CD8-positive, alpha-beta T cell (primary cell): ENCODE measurements at regions of chr20 and their contacts with region 1.

Region 1: DNA sequence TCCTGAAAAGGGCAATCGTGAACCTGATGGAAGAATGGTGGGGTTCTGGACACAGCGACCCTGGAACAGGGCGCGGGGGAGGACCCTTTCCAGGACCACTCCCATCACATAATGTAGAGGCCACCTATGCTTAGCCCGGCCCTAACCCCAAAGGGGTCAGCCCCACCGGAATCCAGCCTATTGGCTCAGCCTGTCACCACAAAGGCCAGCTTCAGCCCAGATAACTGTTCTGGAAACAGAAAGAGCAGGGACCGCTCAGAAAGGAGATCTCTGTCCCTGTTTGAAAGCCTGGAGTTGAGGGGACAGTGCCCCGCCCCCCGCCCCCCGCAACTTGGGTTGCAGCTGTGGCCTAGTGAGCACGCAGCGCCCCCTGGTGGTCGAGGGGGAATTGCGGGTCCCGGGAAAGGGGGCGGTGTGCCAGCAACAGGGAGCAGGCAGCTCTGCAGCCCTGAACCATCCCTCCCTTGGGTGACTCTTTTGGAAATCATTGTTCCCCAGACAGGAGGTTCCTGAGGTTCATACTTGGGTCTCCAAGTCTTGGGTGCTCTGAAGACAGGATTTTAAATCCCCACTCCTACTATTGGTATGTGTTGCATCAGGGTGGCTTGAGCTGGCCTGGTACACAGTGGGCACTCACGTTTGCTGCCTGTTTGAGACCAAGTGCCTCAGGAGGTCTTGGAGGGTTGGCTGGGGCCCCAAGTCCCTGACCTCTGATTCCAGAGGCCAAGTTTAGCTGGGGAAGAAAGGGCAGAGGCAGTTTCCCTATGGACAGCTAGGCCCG is 1.5 kb downstream of the SIGLEC1 start:
- DNase-seq: peak; percentile 58 to 86 (median 75)
- ATAC-seq: peak; percentile 79
- H3K4me3 ChIP-seq: no peak overlapping the region
- H3K4me3 Mint-ChIP-seq: no peak overlapping the region
- H3K27ac ChIP-seq: no peak overlapping the region
- H3K27ac Mint-ChIP-seq: no peak overlapping the region
- H3K4me1 ChIP-seq: no peaks in the 10 kb centered on the region
- H3K4me1 Mint-ChIP-seq: no peaks in the 10 kb centered on the region
- H3K27me3 ChIP-seq: peaks cover 0 to 5% of the 10 kb centered on the region in 2 experiments
- H3K27me3 Mint-ChIP-seq: no peaks in the 10 kb centered on the region
- CTCF ChIP-seq: peak; percentile 90

Region 2: GRCh38 chr20:3378138-3378537 is 332.8 kb before region 1 on chr20:
- CTCF ChIA-PET with region 1: no interaction called
- POLR2A ChIA-PET with region 1: no interaction called
- intact Hi-C with region 1: no loop called
- DNase-seq: no peak
- ATAC-seq: no peak
- H3K4me3 ChIP-seq: no peak overlapping the region
- H3K4me3 Mint-ChIP-seq: no peak overlapping the region
- H3K27ac ChIP-seq: no peak overlapping the region
- H3K27ac Mint-ChIP-seq: no peak overlapping the region
- H3K4me1 ChIP-seq: no peaks in the 10 kb centered on the region
- H3K4me1 Mint-ChIP-seq: peaks cover 3% of the 10 kb centered on the region
- H3K27me3 ChIP-seq: no peaks in the 10 kb centered on the region
- H3K27me3 Mint-ChIP-seq: no peaks in the 10 kb centered on the region
- CTCF ChIP-seq: no peak

Region 3: GRCh38 chr20:3563548-3564177 is 147.2 kb before region 1 on chr20:
- CTCF ChIA-PET with region 1: interaction called, 5 read pairs
- POLR2A ChIA-PET with region 1: no interaction called
- intact Hi-C with region 1: loop called in 1 of 2 experiments (anchors 1 kb)
- DNase-seq: peak in 2 of 9 experiments; percentile 39 to 54
- ATAC-seq: no peak
- H3K4me3 ChIP-seq: no peak overlapping the region
- H3K4me3 Mint-ChIP-seq: no peak overlapping the region
- H3K27ac ChIP-seq: no peak overlapping the region
- H3K27ac Mint-ChIP-seq: no peak overlapping the region
- H3K4me1 ChIP-seq: no peaks in the 10 kb centered on the region
- H3K4me1 Mint-ChIP-seq: no peaks in the 10 kb centered on the region
- H3K27me3 ChIP-seq: no peaks in the 10 kb centered on the region
- H3K27me3 Mint-ChIP-seq: no peaks in the 10 kb centered on the region
- CTCF ChIP-seq: peak; percentile 56

Region 4: GRCh38 chr20:3658716-3659491 is 52.0 kb before region 1 on chr20:
- CTCF ChIA-PET with region 1: no interaction called
- POLR2A ChIA-PET with region 1: no interaction called
- intact Hi-C with region 1: no loop called
- DNase-seq: no peak
- ATAC-seq: no peak
- H3K4me3 ChIP-seq: no peak overlapping the region
- H3K4me3 Mint-ChIP-seq: no peak overlapping the region
- H3K27ac ChIP-seq: no peak overlapping the region
- H3K27ac Mint-ChIP-seq: no peak overlapping the region
- H3K4me1 ChIP-seq: no peaks in the 10 kb centered on the region
- H3K4me1 Mint-ChIP-seq: peaks cover 6% of the 10 kb centered on the region
- H3K27me3 ChIP-seq: peaks cover 6 to 7% of the 10 kb centered on the region in 2 experiments
- H3K27me3 Mint-ChIP-seq: peaks cover 37% of the 10 kb centered on the region
- CTCF ChIP-seq: no peak

Region 5: DNA sequence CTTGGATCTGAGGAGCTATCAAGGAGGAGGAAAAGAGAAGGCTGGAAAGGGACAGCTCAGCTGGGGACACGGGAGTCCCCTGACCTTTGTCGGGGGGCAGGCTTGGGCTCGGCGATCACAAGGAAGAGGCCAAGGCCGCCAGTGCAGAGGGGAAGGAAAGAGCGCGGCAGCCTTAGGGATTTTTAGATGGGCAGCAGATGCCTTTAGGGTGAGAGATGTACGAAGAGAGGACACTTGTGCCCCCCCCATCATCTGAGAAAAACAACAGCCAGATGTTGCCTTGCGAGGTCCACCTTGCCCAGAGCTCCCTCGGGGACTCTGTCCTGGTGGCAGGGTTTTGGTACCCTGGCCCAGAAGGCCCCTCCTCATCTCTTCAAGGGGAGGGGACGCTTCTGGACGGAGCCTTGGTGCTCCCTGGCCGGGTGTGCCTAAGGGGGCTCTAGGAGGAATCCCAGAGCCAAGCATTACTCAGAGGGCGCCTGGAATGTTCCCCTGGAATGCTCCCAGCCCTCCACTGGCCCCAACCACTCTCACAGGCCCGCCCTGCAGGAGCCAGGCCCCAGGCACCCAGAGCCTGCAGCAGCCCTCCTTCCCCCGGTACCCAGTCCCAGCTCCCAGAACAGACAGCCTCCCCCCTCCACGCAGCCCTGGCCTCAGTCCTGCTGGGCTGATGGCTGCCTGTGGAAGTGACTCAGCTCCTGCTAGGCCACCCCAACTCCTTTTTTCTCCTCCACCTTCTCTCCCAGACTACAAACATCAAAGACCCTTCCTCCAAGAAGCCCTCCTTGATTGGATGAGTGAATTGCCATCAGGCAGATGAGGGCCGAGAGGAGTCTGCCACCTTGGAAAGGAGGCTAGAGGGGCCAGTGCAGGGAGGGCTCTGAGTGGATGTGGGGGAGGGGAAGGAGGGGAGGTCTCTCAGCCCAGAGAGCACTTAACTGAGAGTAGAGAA is 30.9 kb before region 1 on chr20:
- CTCF ChIA-PET with region 1: interaction called, 16 read pairs
- POLR2A ChIA-PET with region 1: no interaction called
- intact Hi-C with region 1: loop called in 1 of 2 experiments (anchors 2 kb)
- DNase-seq: no peak
- ATAC-seq: no peak
- H3K4me3 ChIP-seq: no peak overlapping the region
- H3K4me3 Mint-ChIP-seq: no peak overlapping the region
- H3K27ac ChIP-seq: no peak overlapping the region
- H3K27ac Mint-ChIP-seq: no peak overlapping the region
- H3K4me1 ChIP-seq: peaks cover 4% of the 10 kb centered on the region
- H3K4me1 Mint-ChIP-seq: peaks cover 10% of the 10 kb centered on the region
- H3K27me3 ChIP-seq: peaks cover 0 to 10% of the 10 kb centered on the region in 2 experiments
- H3K27me3 Mint-ChIP-seq: peaks cover 45% of the 10 kb centered on the region
- CTCF ChIP-seq: no peak

Region 6: DNA sequence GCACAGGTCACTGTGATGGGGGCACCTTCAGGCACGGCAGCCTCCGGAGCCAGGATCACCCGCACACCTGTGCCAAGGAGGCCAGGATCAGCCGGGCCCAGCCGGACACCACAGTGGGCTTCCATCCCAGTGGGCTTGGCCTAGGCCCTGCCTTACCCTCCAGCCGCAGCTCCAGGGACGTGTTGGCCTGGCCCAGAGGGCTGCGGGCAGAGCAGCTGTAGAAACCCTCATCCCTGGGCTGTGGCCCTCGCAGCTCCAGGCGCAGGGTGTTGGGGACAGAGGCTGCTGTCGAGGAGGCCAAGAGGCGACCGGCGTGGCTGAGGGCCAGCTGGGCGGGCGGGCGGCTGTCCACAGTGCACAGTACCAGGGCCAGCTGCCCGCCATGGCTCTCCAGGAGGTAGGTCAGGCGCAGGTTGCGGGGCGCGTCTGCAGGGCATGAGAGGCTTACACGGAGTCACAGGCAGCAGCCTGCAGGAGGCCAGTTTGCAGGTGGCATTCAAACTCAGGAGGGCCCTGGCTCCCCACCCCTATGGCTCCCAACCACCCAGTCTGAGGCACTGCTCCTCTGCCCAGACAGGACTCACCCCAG is 18.1 kb before region 1 on chr20:
- CTCF ChIA-PET with region 1: interaction called, 14 read pairs
- POLR2A ChIA-PET with region 1: no interaction called
- intact Hi-C with region 1: no loop called
- DNase-seq: no peak
- ATAC-seq: no peak
- H3K4me3 ChIP-seq: no peak overlapping the region
- H3K4me3 Mint-ChIP-seq: no peak overlapping the region
- H3K27ac ChIP-seq: no peak overlapping the region
- H3K27ac Mint-ChIP-seq: no peak overlapping the region
- H3K4me1 ChIP-seq: no peaks in the 10 kb centered on the region
- H3K4me1 Mint-ChIP-seq: no peaks in the 10 kb centered on the region
- H3K27me3 ChIP-seq: no peaks in the 10 kb centered on the region
- H3K27me3 Mint-ChIP-seq: no peaks in the 10 kb centered on the region
- CTCF ChIP-seq: no peak

Region 7: GRCh38 chr20:3698591-3699001 is 12.3 kb before region 1 on chr20:
- CTCF ChIA-PET with region 1: interaction called, 14 read pairs
- POLR2A ChIA-PET with region 1: no interaction called
- intact Hi-C with region 1: no loop called
- DNase-seq: no peak
- ATAC-seq: no peak
- H3K4me3 ChIP-seq: no peak overlapping the region
- H3K4me3 Mint-ChIP-seq: no peak overlapping the region
- H3K27ac ChIP-seq: no peak overlapping the region
- H3K27ac Mint-ChIP-seq: no peak overlapping the region
- H3K4me1 ChIP-seq: no peaks in the 10 kb centered on the region
- H3K4me1 Mint-ChIP-seq: no peaks in the 10 kb centered on the region
- H3K27me3 ChIP-seq: no peaks in the 10 kb centered on the region
- H3K27me3 Mint-ChIP-seq: peaks cover 2% of the 10 kb centered on the region
- CTCF ChIP-seq: no peak